Naive thymus-derived CD4-positive, alpha-beta T cell (primary cell): ENCODE measurements at regions of chr17 and their contacts with region 1.

Region 1: DNA sequence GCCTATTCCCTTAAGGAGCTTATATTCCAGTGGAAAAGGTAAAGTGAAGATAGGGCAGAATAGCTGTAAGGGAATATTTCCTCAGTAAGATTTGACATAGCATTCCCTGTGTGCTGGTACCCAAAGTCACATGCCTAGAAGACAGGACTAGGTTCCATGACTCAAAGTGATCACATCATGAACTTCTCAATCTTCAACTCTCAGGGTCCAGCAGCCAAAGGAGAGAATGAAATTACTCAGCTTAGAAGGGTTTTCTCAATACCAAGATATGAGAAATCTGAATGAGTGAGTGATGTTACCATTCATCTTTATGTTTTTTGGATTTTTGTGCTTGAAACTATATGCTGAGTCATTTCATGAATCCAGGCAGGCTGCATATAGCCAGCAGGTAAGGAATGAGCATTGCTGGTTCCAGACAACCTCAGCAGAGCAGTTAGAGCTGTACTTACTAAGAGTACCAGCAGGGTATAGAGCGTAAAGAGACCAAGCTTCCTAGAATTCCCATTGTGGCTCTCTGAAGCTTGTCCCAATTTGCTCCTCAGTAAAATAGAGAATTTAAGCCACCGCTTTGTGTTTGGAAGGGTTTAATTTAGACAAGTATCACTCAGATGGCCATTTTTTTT is 91.1 kb downstream of the ANKFN1 start:
- DNase-seq: no peak
- ATAC-seq: no peak
- H3K4me3 ChIP-seq: no peak overlapping the region
- H3K4me3 Mint-ChIP-seq: no peak overlapping the region
- H3K27ac ChIP-seq: no peak overlapping the region
- H3K27ac Mint-ChIP-seq: no peak overlapping the region
- H3K4me1 ChIP-seq: no peaks in the 10 kb centered on the region
- H3K4me1 Mint-ChIP-seq: no peaks in the 10 kb centered on the region
- H3K27me3 ChIP-seq: no peaks in the 10 kb centered on the region
- H3K27me3 Mint-ChIP-seq: peaks cover 11 to 37% (median 29%) of the 10 kb centered on the region in 5 donors

Region 2: GRCh38 chr17:55830699-55831445 is 413.5 kb before region 1 on chr17:
- CTCF ChIA-PET with region 1: no interaction called
- POLR2A ChIA-PET with region 1: no interaction called
- intact Hi-C with region 1: loop called in 1 of 2 experiments (anchors 10 kb)
- DNase-seq: no peak
- ATAC-seq: no peak
- H3K4me3 ChIP-seq: no peak overlapping the region
- H3K4me3 Mint-ChIP-seq: no peak overlapping the region
- H3K27ac ChIP-seq: no peak overlapping the region
- H3K27ac Mint-ChIP-seq: no peak overlapping the region
- H3K4me1 ChIP-seq: no peaks in the 10 kb centered on the region
- H3K4me1 Mint-ChIP-seq: no peaks in the 10 kb centered on the region
- H3K27me3 ChIP-seq: no peaks in the 10 kb centered on the region
- H3K27me3 Mint-ChIP-seq: peaks cover 0 to 17% (median 8%) of the 10 kb centered on the region in 5 donors

Region 3: GRCh38 chr17:56297184-56297583 is 52.8 kb after region 1 on chr17:
- CTCF ChIA-PET with region 1: no interaction called
- POLR2A ChIA-PET with region 1: no interaction called
- intact Hi-C with region 1: no loop called
- DNase-seq: peak in 6 of 9 donors; percentile 4 to 37 (median 18)
- ATAC-seq: peak; percentile 27
- H3K4me3 ChIP-seq: no peak overlapping the region
- H3K4me3 Mint-ChIP-seq: peak overlapping the region; percentile 34 to 80 (median 65)
- H3K27ac ChIP-seq: no peak overlapping the region
- H3K27ac Mint-ChIP-seq: peak overlapping the region in 8 of 9 donors; percentile 24 to 78 (median 44)
- H3K4me1 ChIP-seq: peaks cover 0 to 12% of the 10 kb centered on the region in 2 donors
- H3K4me1 Mint-ChIP-seq: peaks cover 9 to 26% (median 12%) of the 10 kb centered on the region in 7 donors
- H3K27me3 ChIP-seq: no peaks in the 10 kb centered on the region
- H3K27me3 Mint-ChIP-seq: peaks cover 0 to 5% (median 4%) of the 10 kb centered on the region in 5 donors